AG04449 (cell line): ENCODE measurements at regions of chr20 and their contacts with region 1.

Region 1: DNA sequence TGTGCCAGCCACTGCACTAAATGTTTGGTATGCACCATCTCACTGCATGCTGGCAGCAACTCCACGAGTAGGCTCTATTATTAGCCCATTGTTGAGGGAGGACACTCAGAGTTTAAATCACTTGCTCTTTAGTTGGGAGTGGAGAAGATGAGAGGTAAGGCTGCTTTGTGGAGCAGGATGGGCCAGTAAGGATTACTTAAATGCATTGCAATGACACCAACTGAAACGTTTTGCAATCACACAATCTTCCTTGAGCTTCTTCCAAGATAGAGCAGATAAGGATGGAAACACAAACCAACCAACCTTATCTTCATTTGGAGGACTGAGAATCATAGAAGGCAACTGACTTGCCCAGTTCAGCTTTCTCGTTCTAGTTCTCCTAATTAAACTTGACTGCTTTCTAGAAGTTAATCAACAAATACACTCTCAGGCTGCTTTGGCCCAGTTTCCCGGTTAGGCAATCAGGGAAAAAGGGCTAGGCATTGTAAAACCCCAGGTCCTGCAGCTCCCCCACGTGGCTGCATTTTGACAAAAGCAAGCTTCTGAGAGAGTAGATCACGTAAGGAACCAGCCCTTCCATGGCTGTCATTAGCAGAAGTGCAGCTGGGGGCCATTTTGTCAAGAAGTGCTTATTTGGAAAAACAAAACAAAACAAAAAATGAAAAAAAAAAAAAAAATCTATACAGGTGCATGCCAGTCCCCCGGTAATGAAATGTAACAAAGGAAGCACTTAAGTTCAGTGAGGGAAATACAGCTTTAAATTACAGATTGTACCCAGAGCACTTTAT is 130.6 kb downstream of the BCAS1 start:
- DNase-seq: peak; percentile 72
- H3K4me3 ChIP-seq: no peak overlapping the region
- CTCF ChIP-seq: peak; percentile 78

Region 2: GRCh38 chr20:53570521-53571357 is 369.0 kb before region 1 on chr20:
- CTCF ChIA-PET with region 1: interaction called, 128 read pairs
- POLR2A ChIA-PET with region 1: no interaction called
- DNase-seq: no peak
- H3K4me3 ChIP-seq: no peak overlapping the region
- CTCF ChIP-seq: no peak

Region 3: GRCh38 chr20:53578492-53579222 is 361.1 kb before region 1 on chr20:
- CTCF ChIA-PET with region 1: interaction called, 128 read pairs
- POLR2A ChIA-PET with region 1: no interaction called
- DNase-seq: peak; percentile 52
- H3K4me3 ChIP-seq: no peak overlapping the region
- CTCF ChIP-seq: peak; percentile 54

Region 4: DNA sequence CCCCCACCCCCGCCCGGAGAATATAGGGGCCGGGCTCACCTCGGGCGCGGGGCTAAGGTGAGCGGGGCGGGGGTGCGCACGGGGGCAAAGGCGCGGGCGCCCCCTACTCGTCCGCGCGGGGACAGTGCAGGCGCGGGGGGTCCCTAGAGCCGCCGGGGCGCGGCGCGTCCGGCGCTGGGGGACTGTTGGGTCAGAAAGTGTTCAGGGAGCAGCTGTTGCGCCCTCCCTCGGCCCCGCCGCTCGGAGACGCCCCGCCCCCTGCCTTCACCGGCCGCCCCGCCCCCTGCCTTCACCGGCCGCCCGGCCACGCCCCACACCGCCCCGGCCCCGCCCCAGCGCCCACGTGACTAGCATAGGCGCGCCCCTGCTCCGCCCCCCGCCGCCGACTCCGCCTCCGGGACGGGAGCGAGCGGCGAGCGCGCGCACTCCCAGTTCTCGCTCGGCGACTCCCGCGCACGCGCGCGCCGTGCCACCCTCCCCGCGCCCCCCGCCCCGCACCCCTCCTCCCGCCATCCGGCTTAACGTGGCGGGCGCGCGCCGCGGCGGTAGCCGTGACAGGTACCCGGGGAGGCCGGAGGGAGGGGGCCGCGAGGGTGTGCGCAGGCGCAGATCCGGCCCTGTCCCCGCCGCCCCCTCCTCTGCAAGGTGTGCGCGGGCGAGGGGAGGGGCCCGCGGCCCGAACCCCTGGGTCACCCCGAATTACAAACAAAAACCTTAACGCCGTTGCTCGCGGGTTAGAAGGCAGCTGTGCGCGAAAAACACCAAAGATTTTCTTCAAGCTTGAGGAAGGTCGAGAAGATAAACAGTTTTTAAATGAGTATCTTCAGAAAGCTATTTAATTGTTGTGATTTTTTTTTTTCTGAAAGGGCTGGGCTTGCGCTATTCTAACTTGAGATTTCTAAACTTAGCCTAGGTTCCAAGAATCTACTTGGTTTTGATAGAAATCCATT is 345.4 kb before region 1 on chr20:
- CTCF ChIA-PET with region 1: interaction called, 11 read pairs
- POLR2A ChIA-PET with region 1: interaction called, 6 read pairs
- DNase-seq: no peak
- H3K4me3 ChIP-seq: peak overlapping the region; percentile 72
- CTCF ChIP-seq: peak; percentile 9

Region 5: GRCh38 chr20:53926428-53927028 is 13.2 kb before region 1 on chr20:
- CTCF ChIA-PET with region 1: interaction called, 22 read pairs
- POLR2A ChIA-PET with region 1: no interaction called
- DNase-seq: peak; percentile 79
- H3K4me3 ChIP-seq: no peak overlapping the region
- CTCF ChIP-seq: no peak

Region 6: DNA sequence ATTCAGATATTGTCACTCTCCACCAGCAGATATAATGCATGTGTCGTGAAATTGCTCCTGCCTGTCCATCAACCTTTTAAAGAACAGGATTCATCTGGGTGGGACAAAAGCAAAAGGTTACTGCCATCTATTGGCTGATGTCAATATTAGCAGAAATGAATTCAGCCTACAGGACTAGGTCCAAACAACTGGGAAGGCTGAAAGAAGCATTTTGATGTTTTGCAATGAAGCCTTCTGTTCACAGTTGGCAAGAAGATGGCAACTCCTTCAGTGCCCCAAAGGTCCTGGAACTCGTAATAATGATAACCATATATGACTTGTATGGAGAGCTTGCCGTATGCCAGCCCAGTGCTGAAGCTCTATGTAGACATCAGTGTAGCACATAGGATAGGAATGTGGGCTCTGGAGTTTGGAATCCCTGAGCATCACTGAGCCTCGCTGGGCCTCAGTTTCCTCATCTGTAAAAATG is 123.1 kb after region 1 on chr20:
- CTCF ChIA-PET with region 1: interaction called, 17 read pairs
- POLR2A ChIA-PET with region 1: no interaction called
- DNase-seq: no peak
- H3K4me3 ChIP-seq: no peak overlapping the region
- CTCF ChIP-seq: peak; percentile 38